CD4-positive, alpha-beta memory T cell (primary cell): ENCODE measurements at regions of chr5 and their contacts with region 1.

Region 1: GRCh38 chr5:96973532-96974401 is 37.9 kb downstream of the LNPEP start:
- DNase-seq: peak in 2 of 5 donors; percentile 26 to 38
- H3K4me3 ChIP-seq: no peak overlapping the region
- H3K4me3 Mint-ChIP-seq: peak overlapping the region; percentile 17 to 82 (median 61)
- H3K27ac ChIP-seq: no peak overlapping the region
- H3K27ac Mint-ChIP-seq: peak overlapping the region in 6 of 7 donors; percentile 7 to 85 (median 53)
- H3K4me1 ChIP-seq: peaks cover 77% of the 10 kb centered on the region
- H3K4me1 Mint-ChIP-seq: peaks cover 60 to 80% (median 69%) of the 10 kb centered on the region in 4 donors
- H3K27me3 ChIP-seq: no peaks in the 10 kb centered on the region
- H3K27me3 Mint-ChIP-seq: no peaks in the 10 kb centered on the region

Region 2: GRCh38 chr5:96781031-96781937 is 192.5 kb before region 1 on chr5:
- CTCF ChIA-PET with region 1: no interaction called
- POLR2A ChIA-PET with region 1: no interaction called
- intact Hi-C with region 1: no loop called
- DNase-seq: no peak
- H3K4me3 ChIP-seq: no peak overlapping the region
- H3K4me3 Mint-ChIP-seq: no peak overlapping the region
- H3K27ac ChIP-seq: no peak overlapping the region
- H3K27ac Mint-ChIP-seq: peak overlapping the region in 5 of 7 donors; percentile 24 to 90 (median 51)
- H3K4me1 ChIP-seq: no peaks in the 10 kb centered on the region
- H3K4me1 Mint-ChIP-seq: peaks cover 0 to 8% (median 1%) of the 10 kb centered on the region in 4 donors
- H3K27me3 ChIP-seq: no peaks in the 10 kb centered on the region
- H3K27me3 Mint-ChIP-seq: no peaks in the 10 kb centered on the region

Region 3: DNA sequence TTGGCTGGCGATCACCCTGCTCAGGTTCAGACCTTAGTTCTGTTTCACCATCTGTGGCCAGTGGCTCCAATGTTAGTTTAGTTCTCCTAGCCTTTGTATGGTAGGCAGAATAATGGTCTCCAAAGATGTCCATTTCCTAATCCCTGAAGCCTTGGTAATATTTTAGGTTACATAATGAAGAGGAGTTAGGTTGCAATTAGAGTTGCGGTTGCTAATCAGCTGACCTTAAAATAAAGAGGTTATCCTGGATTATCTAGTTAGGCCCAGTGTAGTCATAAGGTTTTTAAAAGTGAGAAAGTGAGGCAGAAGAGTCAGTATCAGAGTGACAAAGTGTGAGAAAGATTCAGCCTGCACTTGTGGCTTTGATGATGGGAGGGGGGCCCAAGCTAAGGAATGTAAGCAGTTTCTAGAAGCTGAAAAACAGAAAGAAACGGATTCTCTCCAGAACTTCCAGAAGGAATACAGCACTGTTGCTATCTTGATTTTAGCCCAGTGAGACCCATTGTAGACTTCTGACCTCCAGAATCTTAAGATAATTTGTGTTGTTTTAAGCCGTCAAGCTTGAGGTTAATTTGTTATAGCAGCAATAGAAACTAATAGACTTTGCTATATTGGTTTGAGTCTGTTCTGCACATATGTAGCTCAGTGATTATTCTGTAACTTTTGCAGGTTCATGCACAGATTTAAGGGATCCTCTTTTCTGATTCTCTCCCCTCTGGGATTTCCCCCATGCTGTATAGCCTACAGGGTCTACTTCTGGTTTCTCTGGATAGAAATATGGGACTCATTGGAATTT is 16.3 kb before region 1 on chr5:
- CTCF ChIA-PET with region 1: interaction called, 3 read pairs
- POLR2A ChIA-PET with region 1: interaction called, 7 read pairs
- intact Hi-C with region 1: loop called (anchors 2 kb)
- DNase-seq: no peak
- H3K4me3 ChIP-seq: no peak overlapping the region
- H3K4me3 Mint-ChIP-seq: peak overlapping the region; percentile 24 to 90 (median 75)
- H3K27ac ChIP-seq: peak overlapping the region; percentile 39
- H3K27ac Mint-ChIP-seq: peak overlapping the region; percentile 62 to 92 (median 92)
- H3K4me1 ChIP-seq: peaks cover 86% of the 10 kb centered on the region
- H3K4me1 Mint-ChIP-seq: peaks cover 59 to 87% (median 75%) of the 10 kb centered on the region in 4 donors
- H3K27me3 ChIP-seq: no peaks in the 10 kb centered on the region
- H3K27me3 Mint-ChIP-seq: no peaks in the 10 kb centered on the region

Region 4: DNA sequence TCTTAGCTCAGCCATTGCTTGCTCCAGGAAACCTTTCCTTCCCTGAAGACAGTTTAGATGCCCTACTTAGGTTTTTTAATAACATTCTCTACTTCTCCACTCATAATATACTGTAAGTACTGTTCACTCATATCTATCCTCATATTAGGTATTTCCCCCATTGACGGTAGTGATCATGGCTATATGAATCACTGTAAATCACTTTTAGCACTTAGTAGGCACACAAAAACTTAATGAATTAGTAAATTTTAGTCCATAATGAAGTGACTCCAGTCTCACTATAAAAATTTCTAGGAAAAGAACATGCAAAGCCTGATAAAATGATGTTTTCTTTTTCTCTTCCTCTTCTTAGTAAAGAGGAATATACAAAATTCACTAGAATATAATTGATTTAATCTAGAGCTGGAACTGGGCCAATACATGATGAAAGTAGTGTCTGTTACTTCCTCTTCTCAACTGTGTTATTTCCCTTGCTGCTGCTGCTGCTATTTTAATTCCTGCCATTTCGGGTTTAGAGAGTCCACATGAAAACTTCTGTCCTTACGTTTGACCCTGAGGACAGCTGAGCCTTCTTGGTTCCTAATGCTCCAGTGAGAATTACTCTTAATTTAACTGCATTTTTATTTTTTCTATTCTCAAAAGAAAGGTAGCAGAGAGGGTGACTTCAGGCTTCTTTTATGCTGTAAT is 35.6 kb after region 1 on chr5:
- CTCF ChIA-PET with region 1: no interaction called
- POLR2A ChIA-PET with region 1: interaction called, 3 read pairs
- intact Hi-C with region 1: loop called (anchors 5 kb)
- DNase-seq: peak in 4 of 5 donors; percentile 31 to 47 (median 37)
- H3K4me3 ChIP-seq: no peak overlapping the region
- H3K4me3 Mint-ChIP-seq: peak overlapping the region in 5 of 8 donors; percentile 7 to 66 (median 51)
- H3K27ac ChIP-seq: no peak overlapping the region
- H3K27ac Mint-ChIP-seq: peak overlapping the region in 5 of 7 donors; percentile 23 to 87 (median 66)
- H3K4me1 ChIP-seq: peaks cover 24% of the 10 kb centered on the region
- H3K4me1 Mint-ChIP-seq: peaks cover 17 to 32% (median 26%) of the 10 kb centered on the region in 4 donors
- H3K27me3 ChIP-seq: no peaks in the 10 kb centered on the region
- H3K27me3 Mint-ChIP-seq: no peaks in the 10 kb centered on the region